ENCODE measurements at regions of chr22 and their contacts with region 1.

Region 1: DNA sequence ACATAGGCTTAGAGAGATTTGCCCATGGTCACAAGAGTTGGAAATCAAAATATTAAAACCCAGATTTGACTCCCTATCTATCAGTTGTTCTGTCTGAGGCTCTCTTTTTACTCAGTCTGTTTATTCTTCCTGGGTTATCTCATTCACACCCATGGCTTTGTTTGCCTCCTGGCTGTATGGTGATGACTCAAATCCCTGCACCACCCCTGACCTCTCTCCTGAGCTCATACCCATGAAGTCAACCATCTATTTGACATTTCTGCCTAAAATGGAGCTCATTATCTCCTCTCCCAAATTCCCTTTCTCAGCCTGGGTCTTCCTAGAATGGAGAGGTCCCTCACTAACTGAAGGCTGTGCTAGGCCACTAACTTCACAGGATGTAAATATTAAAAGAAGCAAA is 27.8 kb upstream of the CCDC134 start:
- DNase-seq: no peak

Region 2: DNA sequence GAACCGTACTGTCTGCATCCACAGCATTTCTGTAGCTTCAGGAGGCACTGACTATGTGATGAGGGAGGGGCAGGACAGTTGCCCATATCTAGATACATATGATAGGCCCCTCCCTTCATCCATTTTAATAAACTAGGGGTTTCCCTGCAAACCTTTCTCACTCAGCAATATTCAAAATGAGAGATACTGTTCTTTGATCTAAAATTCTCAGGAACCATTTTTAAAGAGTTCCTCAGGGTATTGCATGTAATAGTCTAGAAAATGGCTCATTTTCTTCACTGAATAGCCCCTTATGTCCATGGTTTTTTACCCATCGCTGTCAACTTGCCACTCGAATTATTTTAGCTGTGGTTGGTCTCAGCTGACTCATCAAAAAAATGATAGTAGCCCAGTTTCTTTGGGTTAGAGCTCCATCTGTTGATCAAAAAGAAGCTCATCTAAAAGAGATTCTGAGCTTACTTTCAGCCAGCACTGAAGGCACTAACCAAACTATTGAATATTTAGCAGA is 873.7 kb before region 1 on chr22:
- intact Hi-C with region 1: loop called in 1 of 2 experiments (anchors 10 kb)
- DNase-seq: no peak

Region 3: DNA sequence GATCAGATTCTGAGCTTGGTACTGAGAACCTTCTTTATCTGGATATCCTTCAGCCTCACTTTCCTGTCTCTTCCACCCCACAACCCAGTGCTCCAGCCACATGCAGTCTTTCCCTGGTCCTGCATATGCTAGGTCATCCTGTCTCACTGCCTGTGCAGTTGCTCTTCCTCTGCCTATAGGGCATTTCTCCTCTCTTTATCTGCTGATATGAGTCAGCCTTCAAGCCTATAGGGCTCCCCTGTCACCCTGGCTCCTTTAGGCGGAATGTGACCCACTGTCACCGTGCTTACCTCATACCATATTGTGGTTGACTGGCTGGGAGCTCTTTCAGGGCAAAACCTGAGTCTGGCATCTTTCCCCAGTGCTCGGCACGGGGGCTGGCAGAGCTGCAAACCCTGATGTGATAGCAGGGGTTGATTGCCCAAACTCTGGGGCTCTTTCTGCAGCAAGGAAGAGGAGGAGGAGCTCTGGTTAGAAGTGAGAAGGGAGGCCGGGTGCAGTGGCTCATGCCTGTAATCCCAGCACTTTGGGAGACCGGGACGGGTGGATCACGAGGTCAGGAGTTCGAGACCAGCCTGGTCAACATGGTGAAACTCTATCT is 47.0 kb before region 1 on chr22:
- intact Hi-C with region 1: no loop called
- DNase-seq: no peak

Region 4: GRCh38 chr22:41816181-41816621 is 43.6 kb after region 1 on chr22:
- intact Hi-C with region 1: no loop called
- DNase-seq: no peak